ENCODE measurements at regions of chr15 and their contacts with region 1.

Region 1: GRCh38 chr15:31391687-31392671 is 65.3 kb downstream of the KLF13 start:
- DNase-seq: peak; percentile 94
- H3K4me3 ChIP-seq: peak overlapping the region; percentile 37 to 83 (median 56)
- H3K27ac ChIP-seq: peak overlapping the region; percentile 78 to 94 (median 88)
- H3K4me1 ChIP-seq: peaks cover 0 to 39% (median 31%) of the 10 kb centered on the region in 4 donors
- H3K27me3 ChIP-seq: no peaks in the 10 kb centered on the region
- CTCF ChIP-seq: no peak
- EP300 ChIP-seq: peak in 1 of 4 donors; percentile 28
- POLR2A ChIP-seq: peak; percentile 84 to 85

Region 2: GRCh38 chr15:31080591-31081014 is 311.4 kb before region 1 on chr15:
- intact Hi-C with region 1: no loop called
- DNase-seq: peak; percentile 73
- H3K4me3 ChIP-seq: peak overlapping the region in 2 of 4 donors; percentile 14 to 36
- H3K27ac ChIP-seq: no peak overlapping the region
- H3K4me1 ChIP-seq: no peaks in the 10 kb centered on the region
- H3K27me3 ChIP-seq: peaks cover 0 to 13% (median 0%) of the 10 kb centered on the region in 3 donors
- CTCF ChIP-seq: no peak
- EP300 ChIP-seq: no peak
- POLR2A ChIP-seq: no peak

Region 3: GRCh38 chr15:31352911-31353811 is 38.8 kb before region 1 on chr15:
- intact Hi-C with region 1: no loop called
- DNase-seq: peak; percentile 89
- H3K4me3 ChIP-seq: peak overlapping the region in 1 of 4 donors; percentile 2
- H3K27ac ChIP-seq: peak overlapping the region; percentile 81 to 93 (median 82)
- H3K4me1 ChIP-seq: peaks cover 0 to 84% (median 73%) of the 10 kb centered on the region in 4 donors
- H3K27me3 ChIP-seq: no peaks in the 10 kb centered on the region
- CTCF ChIP-seq: no peak
- EP300 ChIP-seq: peak in 3 of 4 donors; percentile 76 to 90 (median 86)
- POLR2A ChIP-seq: no peak

Region 4: DNA sequence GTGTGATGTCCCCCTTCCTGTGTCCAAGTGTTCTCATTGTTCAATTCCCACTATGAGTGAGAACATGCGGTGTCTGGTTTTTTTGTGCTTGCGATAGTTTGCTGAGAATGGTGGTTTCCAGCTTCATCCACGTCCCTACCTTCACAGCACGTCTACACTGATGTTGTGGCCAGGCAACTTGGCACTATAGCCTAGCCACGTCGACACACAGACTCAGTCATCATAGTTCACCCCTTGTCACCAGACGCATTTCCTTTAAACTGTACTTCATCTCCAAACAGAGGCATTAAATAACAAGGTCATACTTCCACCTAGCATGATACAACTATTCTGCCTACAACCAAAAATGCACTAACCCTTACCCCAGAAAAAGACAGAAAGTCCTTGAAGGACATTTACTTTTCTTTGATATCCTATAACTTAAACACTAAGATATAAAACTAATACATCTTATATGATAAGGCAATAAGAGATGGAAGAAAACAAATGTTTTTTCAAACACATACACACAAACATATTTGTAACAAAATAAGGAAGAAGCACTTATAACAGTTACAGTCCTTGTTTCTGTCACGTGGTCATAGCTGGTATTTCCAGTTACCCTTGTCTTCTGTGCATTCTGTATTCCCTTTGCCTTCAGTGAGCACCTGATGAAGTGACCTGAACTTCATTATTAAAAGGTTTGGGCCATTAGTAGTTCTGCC is 56.1 kb after region 1 on chr15:
- intact Hi-C with region 1: loop called (anchors 2 kb)
- DNase-seq: no peak
- H3K4me3 ChIP-seq: no peak overlapping the region
- H3K27ac ChIP-seq: no peak overlapping the region
- H3K4me1 ChIP-seq: no peaks in the 10 kb centered on the region
- H3K27me3 ChIP-seq: no peaks in the 10 kb centered on the region
- CTCF ChIP-seq: no peak
- EP300 ChIP-seq: no peak
- POLR2A ChIP-seq: no peak

Region 5: DNA sequence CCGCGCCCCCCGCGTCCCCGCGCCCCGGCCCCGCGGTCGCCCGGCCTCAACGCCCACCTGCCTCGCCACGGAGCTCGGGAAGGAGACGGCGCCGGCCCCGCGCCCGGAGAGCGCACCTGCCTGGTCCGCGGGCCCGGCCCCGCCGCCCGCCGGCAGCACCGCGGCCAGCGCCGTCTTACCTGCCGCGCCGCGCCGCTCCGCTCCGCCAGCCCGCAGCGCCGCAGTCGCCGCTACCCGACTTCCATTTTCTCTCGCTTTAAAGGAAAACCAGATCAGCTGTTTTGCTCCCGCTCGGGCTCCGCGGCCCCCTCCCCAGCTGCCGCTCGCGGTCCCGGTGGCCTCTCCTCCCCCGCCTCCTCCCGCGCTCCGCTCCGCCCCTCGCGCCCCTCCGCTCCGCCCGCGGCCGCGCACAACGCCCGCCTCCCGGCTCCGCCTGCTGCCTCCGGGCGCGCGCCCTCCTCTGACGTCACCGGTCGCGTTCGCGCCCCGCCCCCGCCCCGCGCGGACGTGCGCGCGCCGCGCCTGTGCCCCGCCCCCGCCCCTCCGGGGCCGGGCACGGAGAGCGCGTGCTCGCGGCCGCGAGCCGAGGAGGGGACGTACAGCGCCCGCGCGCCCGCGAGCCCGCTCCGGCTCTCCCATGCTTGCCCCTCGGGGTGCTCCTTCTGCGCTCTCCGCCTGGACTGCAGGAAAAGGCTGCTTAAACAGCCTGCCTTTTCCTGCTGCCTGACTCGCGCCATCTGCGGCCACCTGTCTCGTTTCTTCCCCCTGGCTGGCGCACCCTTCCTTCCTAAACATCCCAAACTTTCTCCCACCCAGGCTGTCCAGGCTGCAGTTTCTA is 478.6 kb after region 1 on chr15:
- intact Hi-C with region 1: no loop called
- DNase-seq: peak; percentile 89
- H3K4me3 ChIP-seq: peak within 1 kb of the TSS; percentile 44 to 70 (median 67)
- H3K27ac ChIP-seq: peak within 1 kb of the TSS; percentile 81 to 84 (median 82)
- H3K4me1 ChIP-seq: peaks cover 0 to 12% (median 6%) of the 10 kb centered on the region in 4 donors
- H3K27me3 ChIP-seq: no peaks in the 10 kb centered on the region
- CTCF ChIP-seq: no peak
- EP300 ChIP-seq: no peak
- POLR2A ChIP-seq: no peak